ENCODE measurements at regions of chr11 and their contacts with region 1.

Region 1: DNA sequence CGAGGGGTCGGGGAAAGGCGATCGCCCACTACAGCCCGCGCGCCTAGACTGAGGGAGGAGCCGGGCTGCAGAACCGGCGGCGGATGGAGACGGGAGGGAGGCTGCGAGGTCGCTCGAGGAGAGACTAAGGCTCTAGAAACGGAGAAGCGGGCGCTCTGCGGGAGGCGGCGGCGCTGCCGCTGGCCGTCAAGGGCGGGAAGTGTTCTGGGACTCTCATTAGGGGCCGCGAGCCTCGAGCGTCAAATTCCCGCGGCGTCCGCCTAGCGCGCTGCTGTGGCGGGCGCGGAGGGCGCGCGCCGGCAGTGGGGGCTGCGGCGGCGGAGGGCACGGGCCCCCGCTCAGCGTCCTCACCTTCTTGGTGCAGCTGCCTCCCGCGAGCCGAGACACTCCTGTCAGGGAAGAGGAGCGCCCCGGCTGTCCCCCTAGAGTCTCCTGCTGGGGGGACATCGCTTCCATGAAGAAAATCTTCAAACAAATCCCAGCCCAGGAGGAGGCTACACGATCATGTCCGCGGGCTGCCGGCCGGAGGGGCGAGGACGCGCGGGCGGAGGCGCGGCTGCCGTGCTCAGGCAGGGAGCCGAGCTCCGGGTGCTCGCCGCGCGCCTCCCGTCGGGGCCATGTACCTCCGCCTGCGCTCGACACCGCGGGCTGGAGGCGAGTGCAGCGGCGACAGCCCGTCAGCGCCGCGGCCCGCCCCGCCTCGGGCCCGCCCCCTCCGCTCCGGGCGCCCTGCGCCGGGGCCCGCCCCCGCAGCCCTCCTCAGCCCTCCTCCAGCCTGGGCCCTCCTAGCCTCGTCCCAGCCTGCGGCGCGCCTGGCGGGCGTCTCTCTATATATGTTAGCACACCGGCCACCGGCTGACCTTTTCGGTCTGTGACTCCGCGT is at the start of gene ARHGAP20:
- DNase-seq: peak in 7 of 9 experiments; percentile 0 to 72 (median 28)
- ATAC-seq: peak; percentile 86
- H3K4me3 ChIP-seq: peak within 1 kb of the TSS; percentile 48
- H3K4me3 Mint-ChIP-seq: peak within 1 kb of the TSS; percentile 81
- H3K27ac ChIP-seq: no peak within 1 kb of the TSS
- H3K27ac Mint-ChIP-seq: no peak within 1 kb of the TSS
- H3K4me1 ChIP-seq: no peaks in the 10 kb centered on the region
- H3K4me1 Mint-ChIP-seq: peaks cover 15% of the 10 kb centered on the region
- H3K27me3 ChIP-seq: peaks cover 6 to 13% of the 10 kb centered on the region in 2 experiments
- H3K27me3 Mint-ChIP-seq: peaks cover 51% of the 10 kb centered on the region
- CTCF ChIP-seq: no peak
- total RNA-seq, gene ARHGAP20: 0.06 TPM in 1 of 2 experiments, not detected in the other

Region 2: GRCh38 chr11:110525883-110526282 is 186.1 kb before region 1 on chr11:
- CTCF ChIA-PET with region 1: no interaction called
- POLR2A ChIA-PET with region 1: no interaction called
- intact Hi-C with region 1: loop called in 1 of 2 experiments (anchors 10 kb)
- DNase-seq: peak in 1 of 9 experiments; percentile 22
- ATAC-seq: peak; percentile 39
- H3K4me3 ChIP-seq: no peak overlapping the region
- H3K4me3 Mint-ChIP-seq: no peak overlapping the region
- H3K27ac ChIP-seq: peak overlapping the region in 1 of 2 experiments; percentile 71
- H3K27ac Mint-ChIP-seq: peak overlapping the region; percentile 64
- H3K4me1 ChIP-seq: peaks cover 19% of the 10 kb centered on the region
- H3K4me1 Mint-ChIP-seq: peaks cover 41% of the 10 kb centered on the region
- H3K27me3 ChIP-seq: no peaks in the 10 kb centered on the region
- H3K27me3 Mint-ChIP-seq: no peaks in the 10 kb centered on the region
- CTCF ChIP-seq: no peak

Region 3: GRCh38 chr11:110730773-110731172 is 18.8 kb after region 1 on chr11:
- CTCF ChIA-PET with region 1: no interaction called
- POLR2A ChIA-PET with region 1: no interaction called
- intact Hi-C with region 1: loop called in 1 of 2 experiments (anchors 2 kb)
- DNase-seq: no peak
- ATAC-seq: no peak
- H3K4me3 ChIP-seq: no peak overlapping the region
- H3K4me3 Mint-ChIP-seq: no peak overlapping the region
- H3K27ac ChIP-seq: no peak overlapping the region
- H3K27ac Mint-ChIP-seq: no peak overlapping the region
- H3K4me1 ChIP-seq: no peaks in the 10 kb centered on the region
- H3K4me1 Mint-ChIP-seq: no peaks in the 10 kb centered on the region
- H3K27me3 ChIP-seq: no peaks in the 10 kb centered on the region
- H3K27me3 Mint-ChIP-seq: peaks cover 26% of the 10 kb centered on the region
- CTCF ChIP-seq: no peak

Region 4: GRCh38 chr11:112096194-112096593 is 1384.2 kb after region 1 on chr11:
- CTCF ChIA-PET with region 1: no interaction called
- POLR2A ChIA-PET with region 1: no interaction called
- intact Hi-C with region 1: no loop called
- DNase-seq: no peak
- ATAC-seq: no peak
- H3K4me3 ChIP-seq: no peak overlapping the region
- H3K4me3 Mint-ChIP-seq: no peak overlapping the region
- H3K27ac ChIP-seq: no peak overlapping the region
- H3K27ac Mint-ChIP-seq: no peak overlapping the region
- H3K4me1 ChIP-seq: no peaks in the 10 kb centered on the region
- H3K4me1 Mint-ChIP-seq: peaks cover 5% of the 10 kb centered on the region
- H3K27me3 ChIP-seq: no peaks in the 10 kb centered on the region
- H3K27me3 Mint-ChIP-seq: no peaks in the 10 kb centered on the region
- CTCF ChIP-seq: no peak

Measured in CD8-positive, alpha-beta T cell (primary cell).